ENCODE measurements at regions of chr17 and their contacts with region 1.

Region 1: DNA sequence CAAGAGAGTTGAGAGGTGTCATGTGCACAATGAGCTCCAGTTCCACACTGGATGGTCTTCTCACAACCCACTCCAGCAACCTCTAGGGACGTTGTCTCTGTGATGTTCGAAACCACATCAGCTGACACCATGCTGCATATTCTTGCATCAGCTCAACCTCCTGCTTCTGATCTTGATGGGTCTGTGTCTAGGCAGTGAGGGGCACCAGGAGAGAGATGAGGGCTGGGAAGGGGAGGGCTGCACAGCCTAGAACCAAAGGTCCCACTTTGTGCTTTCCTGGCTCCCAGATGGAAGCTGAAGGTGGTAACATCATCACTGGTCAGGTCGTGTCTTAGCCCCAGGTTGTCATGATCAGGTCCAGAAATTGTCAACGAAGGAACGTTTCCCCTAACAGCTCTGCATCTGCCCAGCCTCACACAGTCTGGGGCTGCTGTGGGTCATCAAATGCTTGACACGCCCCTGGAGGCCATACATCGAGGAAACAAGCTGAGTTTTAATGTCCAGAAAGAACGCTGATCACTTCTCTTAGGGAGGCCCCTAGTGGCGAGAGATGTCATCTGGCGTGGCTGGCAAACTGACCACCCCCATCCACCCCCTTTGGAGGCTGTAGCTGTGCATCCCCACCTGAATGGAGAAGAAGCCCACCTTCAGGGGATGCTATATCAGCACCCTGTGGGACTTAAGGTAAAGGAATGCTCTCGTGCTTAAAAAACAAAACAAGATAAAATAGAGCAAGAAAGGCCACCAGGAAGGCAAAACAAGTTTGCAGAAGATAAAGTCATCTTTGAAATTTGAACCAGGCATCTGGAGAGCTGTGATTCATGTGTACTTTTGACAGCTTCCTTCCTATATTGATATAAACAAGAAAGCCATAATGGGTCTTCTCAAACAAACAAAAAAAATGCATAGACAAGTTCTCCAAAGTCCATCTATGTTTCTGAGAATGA is 58.3 kb downstream of the WIPI1 start:
- DNase-seq: no peak
- ATAC-seq: peak; percentile 99
- H3K4me3 ChIP-seq: no peak overlapping the region
- H3K27ac ChIP-seq: no peak overlapping the region
- H3K4me1 ChIP-seq: peaks cover 6% of the 10 kb centered on the region
- H3K27me3 ChIP-seq: no peaks in the 10 kb centered on the region
- CTCF ChIP-seq: peak; percentile 84 to 89 (median 88)
- EP300 ChIP-seq: no peak
- POLR2A ChIP-seq: peak; percentile 34; the same call in 1 of the 2 replicates
- RAD21 ChIP-seq: peak; percentile 82

Region 2: DNA sequence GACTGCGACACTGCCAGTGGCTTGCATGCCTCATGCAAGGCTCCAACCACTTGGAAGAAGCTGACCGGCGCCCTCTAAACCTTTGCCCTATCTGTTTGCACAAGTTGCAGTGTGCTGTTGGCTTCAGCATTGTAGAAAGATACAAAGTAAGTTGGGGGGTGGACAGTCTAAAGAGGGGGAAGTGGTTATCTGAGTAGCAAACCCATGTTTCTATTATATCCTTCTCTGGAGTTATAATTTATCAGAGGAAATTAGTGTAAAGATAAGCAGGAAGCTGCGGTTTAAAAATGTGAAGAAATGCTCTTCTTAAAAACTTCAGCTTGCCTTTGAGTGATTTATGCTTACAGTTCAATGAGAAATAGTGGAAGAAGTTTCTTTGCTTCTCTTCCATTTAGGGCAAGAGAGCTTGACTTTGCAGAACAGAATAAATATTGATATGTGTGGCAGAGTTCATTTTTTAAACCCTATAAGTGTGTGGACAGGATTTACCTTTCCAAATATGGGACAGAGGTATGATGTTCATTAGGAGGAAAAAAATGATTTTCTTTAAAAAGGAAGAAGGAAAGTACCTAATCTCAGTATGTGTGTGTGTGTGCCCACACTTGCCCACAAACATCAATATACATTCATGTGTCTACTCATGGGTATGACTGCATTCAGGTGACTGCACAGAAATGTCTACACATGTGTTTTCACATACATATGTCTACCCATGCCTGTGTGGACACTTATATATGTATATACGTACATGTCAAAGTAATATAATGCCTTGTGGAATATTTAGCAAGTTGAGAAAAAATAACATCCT is 143.0 kb before region 1 on chr17:
- CTCF ChIA-PET with region 1: interaction called, 103 read pairs
- POLR2A ChIA-PET with region 1: no interaction called
- RAD21 ChIA-PET with region 1: interaction called, 3 read pairs
- SMC1A ChIA-PET with region 1: interaction called, 6 read pairs
- in situ Hi-C with region 1: no loop called
- intact Hi-C with region 1: no loop called
- DNase-seq: no peak
- ATAC-seq: peak; percentile 57
- H3K4me3 ChIP-seq: no peak overlapping the region
- H3K27ac ChIP-seq: no peak overlapping the region
- H3K4me1 ChIP-seq: peaks cover 7% of the 10 kb centered on the region; the same call in 1 of the 2 replicates
- H3K27me3 ChIP-seq: no peaks in the 10 kb centered on the region
- CTCF ChIP-seq: no peak
- EP300 ChIP-seq: no peak
- POLR2A ChIP-seq: no peak
- RAD21 ChIP-seq: no peak

Region 3: GRCh38 chr17:68273722-68274121 is 125.2 kb before region 1 on chr17:
- CTCF ChIA-PET with region 1: interaction called, 11 read pairs
- POLR2A ChIA-PET with region 1: no interaction called
- RAD21 ChIA-PET with region 1: no interaction called
- SMC1A ChIA-PET with region 1: interaction called, 3 read pairs
- in situ Hi-C with region 1: no loop called
- intact Hi-C with region 1: no loop called
- DNase-seq: no peak
- ATAC-seq: no peak
- H3K4me3 ChIP-seq: no peak overlapping the region
- H3K27ac ChIP-seq: no peak overlapping the region
- H3K4me1 ChIP-seq: no peaks in the 10 kb centered on the region
- H3K27me3 ChIP-seq: no peaks in the 10 kb centered on the region
- CTCF ChIP-seq: no peak
- EP300 ChIP-seq: no peak
- POLR2A ChIP-seq: no peak
- RAD21 ChIP-seq: no peak

Region 4: DNA sequence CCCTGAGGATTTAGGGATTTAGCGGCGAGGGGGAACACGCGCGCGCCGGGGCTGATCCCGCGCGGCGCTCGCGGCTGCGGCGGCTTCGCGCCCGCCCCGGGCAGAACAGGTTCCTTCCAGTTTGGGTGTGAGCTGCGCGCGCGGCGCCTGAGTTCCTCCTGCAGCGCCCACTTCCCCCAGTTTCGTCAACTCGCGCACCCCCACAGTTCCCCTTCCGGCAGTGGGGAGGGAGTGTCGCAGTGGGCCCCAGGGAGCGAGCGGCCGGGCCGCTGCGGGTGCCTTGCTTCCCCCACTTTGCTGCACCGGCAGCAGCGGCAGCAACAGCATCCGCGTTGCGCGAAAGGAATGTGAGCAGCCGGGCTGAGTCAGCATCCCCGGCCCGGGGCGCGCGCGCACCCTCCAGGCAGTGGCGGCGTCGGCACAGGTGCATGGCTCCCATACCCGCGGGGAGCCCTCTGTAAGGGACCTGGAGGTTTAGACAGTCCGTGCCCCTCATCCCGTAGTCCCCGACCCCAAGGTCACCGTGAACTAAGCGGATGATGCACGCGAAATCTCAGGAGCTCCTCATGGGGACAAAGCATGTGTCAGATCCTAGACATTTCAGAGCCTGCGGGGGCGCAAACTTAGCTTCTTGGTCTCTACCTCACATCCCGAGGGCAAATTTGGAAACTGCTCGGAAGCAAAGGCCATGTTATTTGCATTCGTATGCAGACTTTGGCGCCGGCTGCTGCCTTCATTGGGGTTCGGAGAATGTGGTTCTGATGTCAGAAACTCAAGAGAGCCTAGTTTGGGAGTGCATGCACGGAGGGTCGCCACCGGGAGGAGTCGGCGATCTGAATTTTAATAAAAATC is 106.9 kb before region 1 on chr17:
- CTCF ChIA-PET with region 1: interaction called, 14 read pairs
- POLR2A ChIA-PET with region 1: no interaction called
- RAD21 ChIA-PET with region 1: interaction called, 4 read pairs
- SMC1A ChIA-PET with region 1: interaction called, 7 read pairs
- in situ Hi-C with region 1: no loop called
- intact Hi-C with region 1: no loop called
- DNase-seq: peak; percentile 70
- ATAC-seq: peak; percentile 78
- H3K4me3 ChIP-seq: peak overlapping the region; percentile 74
- H3K27ac ChIP-seq: peak overlapping the region; percentile 95
- H3K4me1 ChIP-seq: peaks cover 22% of the 10 kb centered on the region
- H3K27me3 ChIP-seq: no peaks in the 10 kb centered on the region
- CTCF ChIP-seq: peak; percentile 0 to 24 (median 11); a peak in 2 of 6 replicates
- EP300 ChIP-seq: peak in 1 of 2 experiments; percentile 46; a peak in 1 of 4 replicates
- POLR2A ChIP-seq: peak; percentile 87
- RAD21 ChIP-seq: no peak

Measured in GM12878 (cell line).